Heart right ventricle (tissue), 16 donors: ENCODE measurements at regions of chr2 and their contacts with region 1.

Region 1: DNA sequence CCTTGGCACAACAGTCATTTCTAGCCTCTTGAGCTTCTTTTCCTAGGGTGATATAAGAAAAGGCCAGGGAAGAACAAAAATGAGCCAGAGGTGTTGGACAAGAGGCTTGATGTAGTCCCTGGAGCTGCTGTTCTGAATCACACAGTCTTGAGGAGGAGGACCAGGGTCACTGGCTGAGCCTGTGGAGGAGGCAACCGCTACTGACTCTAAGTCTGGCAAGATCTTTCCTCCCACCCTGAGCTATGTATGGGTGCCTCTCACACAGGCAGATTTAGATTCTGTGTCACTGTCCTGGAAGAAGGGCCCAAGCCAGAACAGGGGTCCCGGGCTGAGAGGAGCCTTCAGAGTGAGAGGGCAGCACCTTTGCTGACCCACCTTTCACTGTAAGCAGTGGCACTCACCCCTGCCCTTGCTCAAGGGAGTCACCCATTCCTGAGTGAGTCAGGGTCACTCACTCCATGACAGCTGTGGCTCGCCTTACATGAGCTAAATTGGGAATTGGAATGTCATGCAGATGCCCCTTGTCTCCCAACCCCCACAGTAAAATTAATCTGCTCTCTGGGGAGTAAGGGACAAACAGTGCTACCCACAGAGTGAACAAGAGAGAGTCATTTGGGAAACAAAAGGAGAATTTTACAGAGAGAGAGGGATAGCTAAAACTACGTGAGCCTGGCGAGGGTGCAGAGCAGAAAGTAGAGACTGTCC is at the start of gene TRIM54:
- DNase-seq: peak in 1 of 2 donors; percentile 63
- ATAC-seq: peak; percentile 75 to 91 (median 88)
- H3K4me3 ChIP-seq: peak within 1 kb of the TSS; percentile 30 to 69 (median 56)
- H3K27ac ChIP-seq: peak within 1 kb of the TSS; percentile 85 to 97 (median 92)
- H3K4me1 ChIP-seq: peaks cover 0 to 32% (median 18%) of the 10 kb centered on the region in 9 donors
- H3K27me3 ChIP-seq: peaks cover 0 to 15% (median 4%) of the 10 kb centered on the region in 7 donors
- CTCF ChIP-seq: no peak
- total RNA-seq, gene TRIM54: 204 to 303 (median 249) TPM

Region 2: GRCh38 chr2:26964446-26965130 is 317.4 kb before region 1 on chr2:
- intact Hi-C with region 1: loop called in 3 of 10 experiments (anchors 5 to 10 kb)
- DNase-seq: no peak
- ATAC-seq: no peak
- H3K4me3 ChIP-seq: no peak overlapping the region
- H3K27ac ChIP-seq: no peak overlapping the region
- H3K4me1 ChIP-seq: peaks cover 0 to 10% (median 0%) of the 10 kb centered on the region in 9 donors
- H3K27me3 ChIP-seq: peaks cover 0 to 21% (median 0%) of the 10 kb centered on the region in 7 donors
- CTCF ChIP-seq: no peak

Region 3: GRCh38 chr2:27095745-27096651 is 186.0 kb before region 1 on chr2:
- intact Hi-C with region 1: loop called in 6 of 10 experiments (anchors 1 to 5 kb)
- DNase-seq: peak; percentile 52 to 64
- ATAC-seq: peak; percentile 76 to 87 (median 84)
- H3K4me3 ChIP-seq: peak overlapping the region in 9 of 10 donors; percentile 12 to 48 (median 42)
- H3K27ac ChIP-seq: peak overlapping the region in 6 of 10 donors; percentile 37 to 68 (median 57)
- H3K4me1 ChIP-seq: peaks cover 0 to 14% (median 12%) of the 10 kb centered on the region in 9 donors
- H3K27me3 ChIP-seq: no peaks in the 10 kb centered on the region
- CTCF ChIP-seq: no peak

Region 4: DNA sequence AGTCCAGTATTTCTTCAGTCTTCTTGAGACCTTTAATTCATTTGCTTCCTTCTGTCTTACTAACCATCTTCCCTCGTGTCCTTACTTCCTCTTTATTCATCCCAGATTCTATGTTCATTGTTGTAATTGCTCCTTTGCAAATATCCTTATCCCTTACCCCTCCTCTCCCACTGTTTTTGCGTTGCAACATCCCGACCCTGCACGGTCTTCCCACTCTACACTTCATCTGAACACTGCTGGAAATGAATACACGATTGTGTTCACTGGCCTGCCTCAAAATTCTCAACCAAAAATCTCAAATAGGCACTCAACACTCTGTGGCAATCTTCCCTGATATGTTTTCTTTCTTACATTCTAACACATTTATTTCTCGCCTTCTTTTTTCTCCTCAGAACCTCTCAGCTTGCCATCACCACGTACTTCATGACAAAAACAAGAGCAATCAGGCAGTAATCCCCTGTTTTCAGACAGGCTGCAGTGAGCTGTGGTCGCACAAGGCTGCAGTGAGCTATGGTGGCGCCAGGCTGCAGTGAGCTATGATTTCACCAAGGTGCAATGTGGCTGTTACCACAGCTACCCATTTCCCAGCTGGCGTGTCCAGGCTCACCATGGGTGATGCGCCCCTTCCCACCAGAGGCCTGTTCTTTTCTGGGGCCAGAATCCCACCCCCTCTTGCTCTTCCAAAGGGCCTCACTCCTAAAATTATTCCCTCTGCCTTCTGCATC is 107.5 kb before region 1 on chr2:
- intact Hi-C with region 1: loop called in 1 of 10 experiments (anchors 10 kb)
- DNase-seq: no peak
- ATAC-seq: no peak
- H3K4me3 ChIP-seq: no peak overlapping the region
- H3K27ac ChIP-seq: no peak overlapping the region
- H3K4me1 ChIP-seq: peaks cover 0 to 14% (median 0%) of the 10 kb centered on the region in 9 donors
- H3K27me3 ChIP-seq: peaks cover 0 to 32% (median 17%) of the 10 kb centered on the region in 7 donors
- CTCF ChIP-seq: no peak

Region 5: DNA sequence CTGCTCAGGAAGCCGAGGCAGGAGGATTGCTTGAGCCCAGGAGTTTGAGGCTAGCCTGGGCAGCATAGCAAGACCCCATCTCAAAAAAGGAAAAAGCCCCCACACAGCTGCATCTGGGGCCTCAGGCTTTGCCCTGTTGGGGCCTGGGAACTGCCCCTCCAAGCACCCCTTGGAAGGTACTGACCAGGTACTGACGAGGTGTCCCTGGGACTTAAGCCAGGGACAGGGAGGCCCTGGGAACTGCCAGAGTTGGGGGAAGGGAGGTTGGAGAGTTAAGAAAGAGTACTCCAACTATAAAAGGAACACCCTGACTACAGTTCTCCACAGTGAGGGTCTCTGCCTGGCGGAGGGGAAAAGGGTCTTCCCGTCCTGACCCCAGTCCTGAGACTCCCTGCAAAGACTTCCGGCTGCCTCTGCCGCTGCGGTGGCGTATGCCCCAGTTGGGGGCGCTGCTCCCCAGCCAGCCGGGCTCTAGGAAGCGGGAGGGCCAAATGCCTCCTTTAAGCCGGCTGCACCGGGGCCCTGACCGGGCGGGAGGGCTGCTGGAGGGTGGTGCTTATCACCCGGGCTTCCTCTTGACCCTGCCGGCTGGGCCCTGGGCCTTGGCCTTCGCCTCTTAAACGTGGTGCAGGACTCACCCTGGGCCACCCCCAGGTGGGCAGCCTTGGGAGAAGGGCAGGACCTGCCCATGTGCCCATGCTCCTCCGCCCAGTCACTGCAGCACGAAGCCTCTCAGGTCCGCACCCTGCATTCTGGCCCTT is 31.9 kb before region 1 on chr2:
- intact Hi-C with region 1: loop called in 4 of 10 experiments (anchors 1 to 5 kb)
- DNase-seq: peak; percentile 45 to 64
- ATAC-seq: peak; percentile 71 to 87 (median 79)
- H3K4me3 ChIP-seq: peak overlapping the region in 1 of 10 donors; percentile 10
- H3K27ac ChIP-seq: no peak overlapping the region
- H3K4me1 ChIP-seq: peaks cover 0 to 20% (median 9%) of the 10 kb centered on the region in 9 donors
- H3K27me3 ChIP-seq: peaks cover 0 to 43% (median 22%) of the 10 kb centered on the region in 7 donors
- CTCF ChIP-seq: peak; percentile 40 to 81 (median 75)

Region 6: DNA sequence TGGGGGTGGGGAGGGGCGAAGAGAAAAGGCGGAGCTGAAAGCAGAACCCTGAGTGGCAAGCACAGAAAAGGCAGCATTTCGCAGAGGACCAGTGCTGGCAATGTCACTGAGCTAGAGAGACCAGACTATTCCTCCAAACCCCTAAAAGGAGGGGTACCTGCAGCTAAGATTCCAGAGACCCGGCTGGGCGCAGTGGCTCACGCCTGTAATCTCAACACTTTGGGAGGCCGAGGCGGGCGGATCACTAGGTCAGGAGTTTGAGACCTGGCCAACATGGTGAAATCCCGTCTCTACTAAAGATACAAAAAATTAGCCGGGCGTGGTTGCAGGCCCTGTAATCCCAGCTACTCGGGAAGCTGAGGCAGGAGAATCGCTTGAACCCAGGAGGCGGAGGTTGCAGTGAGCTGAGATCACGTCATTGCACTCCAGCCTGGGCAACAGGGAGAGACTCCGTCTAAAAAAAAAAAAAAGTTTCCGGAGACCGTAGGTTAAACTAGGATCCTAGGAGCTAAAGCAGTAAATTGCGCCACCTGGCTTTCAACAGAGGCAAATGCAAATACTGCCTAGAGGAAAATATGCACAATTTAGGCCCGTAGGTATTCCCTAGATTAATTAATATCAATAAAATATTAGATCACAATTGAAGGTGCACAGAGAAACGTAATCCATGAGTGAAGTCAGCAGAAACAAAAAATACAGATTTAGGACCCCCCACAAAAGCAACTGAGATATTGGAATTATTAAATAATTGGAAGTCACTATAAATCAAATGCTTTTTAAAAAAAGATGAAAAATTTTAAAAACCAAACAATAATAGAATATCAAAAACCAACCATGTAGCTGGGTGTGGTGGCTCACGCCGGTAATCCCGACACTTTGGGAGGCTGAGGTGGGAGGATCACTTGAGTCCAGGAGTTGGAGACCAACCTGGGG is 21.4 kb after region 1 on chr2:
- intact Hi-C with region 1: loop called in 1 of 10 experiments (anchors 2 kb)
- DNase-seq: peak; percentile 21 to 65
- ATAC-seq: peak; percentile 16 to 81 (median 66)
- H3K4me3 ChIP-seq: peak overlapping the region in 8 of 10 donors; percentile 2 to 49 (median 30)
- H3K27ac ChIP-seq: peak overlapping the region in 8 of 10 donors; percentile 8 to 63 (median 54)
- H3K4me1 ChIP-seq: peaks cover 3 to 43% (median 23%) of the 10 kb centered on the region in 9 donors
- H3K27me3 ChIP-seq: peaks cover 0 to 37% (median 31%) of the 10 kb centered on the region in 7 donors
- CTCF ChIP-seq: peak; percentile 75 to 94 (median 89)

Region 7: GRCh38 chr2:28263690-28264089 is 981.7 kb after region 1 on chr2:
- intact Hi-C with region 1: no loop called
- DNase-seq: no peak
- ATAC-seq: no peak
- H3K4me3 ChIP-seq: no peak overlapping the region
- H3K27ac ChIP-seq: no peak overlapping the region
- H3K4me1 ChIP-seq: peaks cover 0 to 6% (median 2%) of the 10 kb centered on the region in 9 donors
- H3K27me3 ChIP-seq: no peaks in the 10 kb centered on the region
- CTCF ChIP-seq: no peak